Heart right ventricle (tissue), 16 donors: ENCODE measurements at regions of chr18 and their contacts with region 1.

Region 1: GRCh38 chr18:67651438-67651837 is 134.9 kb upstream of the DSEL start:
- DNase-seq: no peak
- ATAC-seq: peak in 6 of 8 donors; percentile 33 to 89 (median 58)
- H3K4me3 ChIP-seq: no peak overlapping the region
- H3K27ac ChIP-seq: peak overlapping the region in 1 of 10 donors; percentile 15
- H3K4me1 ChIP-seq: peaks cover 0 to 3% (median 0%) of the 10 kb centered on the region in 9 donors
- H3K27me3 ChIP-seq: no peaks in the 10 kb centered on the region
- CTCF ChIP-seq: no peak

Region 2: DNA sequence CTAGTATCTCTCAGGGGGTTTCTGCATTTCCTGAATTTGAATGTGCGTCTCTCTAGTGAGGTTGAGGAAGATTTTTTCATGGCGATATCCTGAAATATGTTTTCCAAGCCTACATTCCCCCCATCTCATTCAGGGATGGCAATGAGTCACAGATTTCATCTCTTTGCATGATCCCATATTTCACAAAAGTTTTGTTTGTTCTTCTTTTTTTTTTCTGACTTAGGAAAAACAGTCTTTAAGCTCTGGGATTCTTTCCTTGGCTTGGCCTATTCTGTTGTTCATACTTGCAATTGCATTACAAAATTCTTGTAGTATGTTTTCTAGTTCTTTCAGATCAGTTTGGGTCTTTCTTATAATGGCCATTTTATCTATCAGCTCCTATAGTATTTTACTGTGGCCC is 271.5 kb before region 1 on chr18:
- intact Hi-C with region 1: no loop called
- DNase-seq: no peak
- ATAC-seq: no peak
- H3K4me3 ChIP-seq: no peak overlapping the region
- H3K27ac ChIP-seq: no peak overlapping the region
- H3K4me1 ChIP-seq: no peaks in the 10 kb centered on the region
- H3K27me3 ChIP-seq: no peaks in the 10 kb centered on the region
- CTCF ChIP-seq: no peak

Region 3: GRCh38 chr18:67600181-67601172 is 51.0 kb before region 1 on chr18:
- intact Hi-C with region 1: no loop called
- DNase-seq: no peak
- ATAC-seq: no peak
- H3K4me3 ChIP-seq: no peak overlapping the region
- H3K27ac ChIP-seq: peak overlapping the region in 2 of 10 donors; percentile 21 to 40
- H3K4me1 ChIP-seq: no peaks in the 10 kb centered on the region
- H3K27me3 ChIP-seq: no peaks in the 10 kb centered on the region
- CTCF ChIP-seq: no peak

Region 4: GRCh38 chr18:67710639-67711038 is 59.2 kb after region 1 on chr18:
- intact Hi-C with region 1: loop called in 1 of 10 experiments (anchors 10 kb)
- DNase-seq: no peak
- ATAC-seq: no peak
- H3K4me3 ChIP-seq: no peak overlapping the region
- H3K27ac ChIP-seq: no peak overlapping the region
- H3K4me1 ChIP-seq: no peaks in the 10 kb centered on the region
- H3K27me3 ChIP-seq: no peaks in the 10 kb centered on the region
- CTCF ChIP-seq: no peak